WTC11 (cell line): ENCODE measurements at regions of chr1 and their contacts with region 1.

Region 1: DNA sequence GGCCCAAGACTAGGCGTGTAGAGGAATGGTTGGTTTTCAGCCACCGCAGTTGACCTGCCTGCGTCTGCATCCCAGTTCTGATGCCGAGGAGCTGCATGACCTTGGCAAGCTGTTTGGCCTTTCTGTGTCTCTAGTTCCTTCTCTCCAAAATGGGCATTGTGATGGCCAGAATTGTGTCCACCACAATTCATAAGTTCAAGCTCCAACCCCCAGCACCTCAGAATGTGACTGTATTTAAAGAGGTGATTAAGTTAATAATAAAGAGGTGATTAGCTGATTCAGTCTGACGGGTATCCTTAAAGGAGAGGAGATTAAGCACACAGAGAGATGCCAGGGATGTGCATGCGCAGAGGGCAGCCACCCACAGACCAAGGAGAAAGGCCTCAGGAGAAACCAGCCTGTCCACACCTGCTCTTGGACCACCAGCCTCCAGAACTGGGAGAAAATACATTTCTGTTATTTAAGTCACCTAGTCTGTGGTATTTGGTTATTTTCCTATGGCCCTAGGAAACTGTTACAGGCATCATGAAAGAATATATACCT is 28.5 kb downstream of the MAB21L3 start:
- DNase-seq: no peak
- ATAC-seq: no peak
- H3K4me3 Mint-ChIP-seq: no peak overlapping the region
- H3K27ac Mint-ChIP-seq: no peak overlapping the region
- H3K4me1 Mint-ChIP-seq: peaks cover 6% of the 10 kb centered on the region
- H3K27me3 Mint-ChIP-seq: no peaks in the 10 kb centered on the region
- CTCF ChIP-seq: no peak

Region 2: DNA sequence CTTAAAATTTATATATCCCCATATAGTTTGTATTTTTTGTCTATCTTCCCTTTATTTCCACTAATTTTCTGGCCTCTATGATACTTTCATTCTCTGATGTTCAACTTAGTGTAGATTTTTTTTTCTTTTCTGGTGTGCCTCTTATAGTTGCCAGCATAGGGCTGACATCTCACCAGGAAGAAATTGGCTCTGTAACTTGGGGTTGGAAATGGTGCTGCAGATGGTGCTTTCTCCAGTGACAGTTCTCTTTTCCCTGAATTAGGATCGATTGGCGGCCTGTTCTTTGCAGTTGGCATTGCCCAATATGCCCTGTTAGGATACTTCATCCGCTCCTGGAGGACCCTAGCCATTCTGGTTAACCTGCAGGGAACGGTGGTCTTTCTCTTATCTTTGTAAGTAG is 113.0 kb before region 1 on chr1:
- CTCF ChIA-PET with region 1: no interaction called
- POLR2A ChIA-PET with region 1: no interaction called
- DNase-seq: no peak
- ATAC-seq: no peak
- H3K4me3 Mint-ChIP-seq: no peak overlapping the region
- H3K27ac Mint-ChIP-seq: no peak overlapping the region
- H3K4me1 Mint-ChIP-seq: peaks cover 3% of the 10 kb centered on the region; the same call in 1 of the 2 replicates
- H3K27me3 Mint-ChIP-seq: no peaks in the 10 kb centered on the region
- CTCF ChIP-seq: no peak

Region 3: DNA sequence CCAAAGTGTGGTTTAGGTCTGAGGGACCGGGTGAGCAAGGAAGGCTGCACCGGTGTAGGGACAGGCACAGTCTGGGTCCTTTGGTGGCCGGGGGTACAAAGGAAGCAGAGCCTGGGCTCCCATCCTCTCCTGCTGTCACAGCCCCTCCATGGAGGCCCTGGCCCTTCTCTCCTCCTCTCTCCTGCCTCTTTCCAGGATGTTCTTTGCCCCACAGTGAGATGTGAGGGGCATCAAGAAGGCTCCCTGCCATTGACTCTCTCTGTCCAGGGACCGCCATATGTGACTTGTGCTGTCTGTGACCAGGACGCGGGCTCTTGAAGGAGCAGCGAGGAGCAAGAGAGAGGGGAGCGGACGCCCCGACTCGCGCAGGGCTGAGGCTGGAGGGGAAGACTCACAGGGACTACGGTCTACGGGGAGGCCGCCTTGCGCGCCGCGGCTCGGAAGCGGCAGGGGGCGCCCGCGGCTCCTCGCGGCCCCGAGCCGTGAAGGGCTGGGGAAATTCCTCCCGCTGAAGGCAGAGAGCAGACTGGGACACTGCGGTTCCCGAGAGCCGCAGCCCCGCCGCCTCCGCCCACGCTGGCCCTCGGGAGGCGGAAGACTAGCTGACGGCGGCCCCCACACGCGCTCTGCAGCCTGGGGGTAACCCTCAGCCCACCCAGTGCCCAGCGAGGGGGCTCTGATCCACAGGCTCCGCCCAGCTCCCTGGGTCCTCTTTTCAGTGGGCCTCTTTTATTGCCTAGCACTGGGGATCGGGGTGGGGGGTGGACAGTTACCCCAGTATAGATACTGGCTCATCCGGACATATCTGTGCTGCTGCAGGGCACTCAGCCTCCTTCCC is 12.3 kb after region 1 on chr1:
- CTCF ChIA-PET with region 1: interaction called, 40 read pairs
- POLR2A ChIA-PET with region 1: no interaction called
- DNase-seq: peak; percentile 78
- ATAC-seq: peak; percentile 95
- H3K4me3 Mint-ChIP-seq: peak overlapping the region; percentile 63
- H3K27ac Mint-ChIP-seq: no peak overlapping the region
- H3K4me1 Mint-ChIP-seq: peaks cover 8% of the 10 kb centered on the region
- H3K27me3 Mint-ChIP-seq: peaks cover 23% of the 10 kb centered on the region
- CTCF ChIP-seq: peak; percentile 74

Region 4: DNA sequence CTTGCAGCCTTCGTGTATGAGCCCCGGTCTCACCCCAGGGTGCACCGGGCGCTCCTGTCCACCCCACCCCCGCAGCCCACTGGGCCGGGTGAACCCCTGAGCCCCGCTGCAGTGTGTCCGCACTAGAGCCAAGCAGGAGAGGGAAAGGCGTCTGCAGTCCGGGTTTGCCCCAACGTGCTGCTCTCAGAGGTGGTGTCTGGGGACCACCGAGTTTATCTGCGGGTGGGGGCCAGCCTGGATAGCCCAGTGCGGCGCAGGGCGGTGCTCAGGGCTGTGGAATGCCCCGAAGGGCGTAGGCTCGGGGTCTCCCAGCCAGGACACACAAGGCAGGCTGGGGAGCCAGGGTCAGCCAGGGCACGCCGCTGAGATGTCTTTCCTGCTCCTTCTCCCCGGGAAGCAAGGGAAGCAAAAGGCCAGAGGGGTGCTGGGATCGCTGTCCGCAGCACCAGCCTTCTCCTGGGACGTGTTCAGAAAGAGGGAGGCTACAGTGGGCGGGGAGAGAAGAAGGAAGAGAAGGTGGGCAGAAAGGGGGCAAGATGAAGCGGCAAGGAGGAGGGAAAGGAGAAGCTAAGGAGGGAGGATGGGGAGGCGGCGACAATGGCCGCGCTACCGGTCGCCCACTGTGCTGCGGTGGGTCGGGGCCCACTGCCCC is 28.1 kb after region 1 on chr1:
- CTCF ChIA-PET with region 1: interaction called, 29 read pairs
- POLR2A ChIA-PET with region 1: interaction called, 4 read pairs
- DNase-seq: peak; percentile 21
- ATAC-seq: peak; percentile 39
- H3K4me3 Mint-ChIP-seq: peak overlapping the region; percentile 79
- H3K27ac Mint-ChIP-seq: no peak overlapping the region
- H3K4me1 Mint-ChIP-seq: peaks cover 24% of the 10 kb centered on the region
- H3K27me3 Mint-ChIP-seq: peaks cover 28% of the 10 kb centered on the region
- CTCF ChIP-seq: no peak

Region 5: GRCh38 chr1:116377541-116378529 is 238.2 kb after region 1 on chr1:
- CTCF ChIA-PET with region 1: interaction called, 19 read pairs
- POLR2A ChIA-PET with region 1: no interaction called
- DNase-seq: no peak
- ATAC-seq: no peak
- H3K4me3 Mint-ChIP-seq: no peak overlapping the region
- H3K27ac Mint-ChIP-seq: peak overlapping the region; percentile 1; the same call in 1 of the 2 replicates
- H3K4me1 Mint-ChIP-seq: peaks cover 82% of the 10 kb centered on the region
- H3K27me3 Mint-ChIP-seq: no peaks in the 10 kb centered on the region
- CTCF ChIP-seq: no peak

Region 6: DNA sequence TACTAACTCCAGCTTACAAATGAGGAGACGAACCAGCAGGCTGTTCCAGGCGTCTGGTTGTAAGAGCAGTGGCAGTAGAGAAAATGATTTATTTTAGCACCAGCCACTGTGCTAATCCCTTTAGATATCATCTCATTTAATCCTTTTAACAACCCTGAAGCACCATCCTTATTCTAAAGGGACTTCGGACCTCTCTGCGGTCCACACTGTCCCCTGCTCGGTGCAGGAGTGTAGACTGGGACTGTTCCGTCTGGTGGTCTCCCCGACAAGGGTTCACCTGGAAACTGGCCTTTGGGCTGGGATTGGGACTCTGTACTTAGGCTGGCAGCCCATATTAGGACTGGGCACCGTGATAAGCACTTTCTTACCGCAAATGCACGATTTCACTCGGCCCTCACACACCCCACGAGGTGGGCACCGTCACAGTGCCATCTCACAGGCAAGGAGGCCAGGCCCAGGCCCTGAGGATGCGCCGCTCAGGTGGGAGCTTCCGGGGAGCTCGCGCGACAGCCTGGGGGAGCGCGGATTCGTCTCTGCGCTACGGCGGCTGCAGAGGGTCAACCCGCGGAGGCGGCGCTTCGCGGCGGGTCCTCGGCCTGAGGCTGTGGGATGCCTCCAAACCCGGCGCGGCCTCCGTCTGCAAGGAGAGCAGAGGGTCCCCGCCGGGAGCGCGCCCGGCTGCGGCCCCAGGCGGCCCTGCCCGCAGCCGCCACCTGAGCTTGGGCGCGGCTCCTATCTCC is 278.6 kb after region 1 on chr1:
- CTCF ChIA-PET with region 1: interaction called, 12 read pairs
- POLR2A ChIA-PET with region 1: no interaction called
- DNase-seq: peak; percentile 86
- ATAC-seq: peak; percentile 80
- H3K4me3 Mint-ChIP-seq: peak overlapping the region; percentile 87
- H3K27ac Mint-ChIP-seq: no peak overlapping the region
- H3K4me1 Mint-ChIP-seq: peaks cover 29% of the 10 kb centered on the region
- H3K27me3 Mint-ChIP-seq: peaks cover 3% of the 10 kb centered on the region; the same call in 1 of the 2 replicates
- CTCF ChIP-seq: no peak

Region 7: GRCh38 chr1:116492358-116492811 is 352.7 kb after region 1 on chr1:
- CTCF ChIA-PET with region 1: interaction called, 196 read pairs
- POLR2A ChIA-PET with region 1: no interaction called
- DNase-seq: no peak
- ATAC-seq: no peak
- H3K4me3 Mint-ChIP-seq: no peak overlapping the region
- H3K27ac Mint-ChIP-seq: no peak overlapping the region
- H3K4me1 Mint-ChIP-seq: peaks cover 30% of the 10 kb centered on the region
- H3K27me3 Mint-ChIP-seq: no peaks in the 10 kb centered on the region
- CTCF ChIP-seq: no peak